K562 (cell line): ENCODE measurements at regions of chr11 and their contacts with region 1.

Region 1: GRCh38 chr11:93895106-93895862 is 44.9 kb upstream of the VSTM5 start:
- DNase-seq: peak; percentile 41 to 67 (median 46)
- ATAC-seq: peak; percentile 90
- H3K4me3 ChIP-seq: no peak overlapping the region
- H3K27ac ChIP-seq: no peak overlapping the region
- H3K4me1 ChIP-seq: no peaks in the 10 kb centered on the region
- H3K27me3 ChIP-seq: peaks cover 4 to 15% of the 10 kb centered on the region in 2 experiments; a peak in 4 of 5 replicates
- CTCF ChIP-seq: peak; percentile 66 to 88 (median 78)
- EP300 ChIP-seq: no peak
- POLR2A ChIP-seq: no peak
- RAD21 ChIP-seq: peak; percentile 93 to 95

Region 2: GRCh38 chr11:94417386-94417987 is 522.2 kb after region 1 on chr11:
- CTCF ChIA-PET with region 1: no interaction called
- POLR2A ChIA-PET with region 1: no interaction called
- in situ Hi-C with region 1: loop called (anchors 10 kb)
- intact Hi-C with region 1: no loop called
- DNase-seq: peak in 1 of 4 experiments; percentile 22
- ATAC-seq: peak; percentile 79
- H3K4me3 ChIP-seq: no peak overlapping the region
- H3K27ac ChIP-seq: no peak overlapping the region
- H3K4me1 ChIP-seq: no peaks in the 10 kb centered on the region
- H3K27me3 ChIP-seq: no peaks in the 10 kb centered on the region
- CTCF ChIP-seq: peak; percentile 27 to 54 (median 44); a peak in 4 of 6 replicates
- EP300 ChIP-seq: no peak
- POLR2A ChIP-seq: no peak
- RAD21 ChIP-seq: peak; percentile 79 to 80

Region 3: DNA sequence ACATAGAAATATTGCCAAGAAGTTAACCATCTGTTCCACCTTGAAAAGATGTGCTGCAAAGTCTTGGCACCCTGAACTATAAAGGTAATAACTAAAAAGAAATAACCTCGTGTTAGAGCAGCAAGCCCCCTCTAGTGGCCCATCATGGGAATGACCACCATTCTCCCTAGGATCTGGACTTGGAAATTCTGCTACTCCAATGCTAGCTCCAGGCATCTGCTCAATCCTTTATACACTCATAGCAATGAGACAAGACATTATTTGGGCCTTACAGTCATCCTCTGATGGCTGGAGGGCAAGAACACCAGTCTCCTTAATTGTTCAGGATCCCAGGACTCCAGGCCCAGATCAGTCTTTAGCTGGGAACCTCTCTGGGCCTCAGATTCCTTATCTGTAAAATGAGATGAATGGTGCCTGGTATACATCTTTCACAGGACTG is 1002.1 kb after region 1 on chr11:
- CTCF ChIA-PET with region 1: no interaction called
- POLR2A ChIA-PET with region 1: no interaction called
- in situ Hi-C with region 1: no loop called
- intact Hi-C with region 1: loop called (anchors 10 kb)
- DNase-seq: peak; percentile 46 to 64 (median 58)
- ATAC-seq: peak; percentile 84
- H3K4me3 ChIP-seq: no peak overlapping the region
- H3K27ac ChIP-seq: no peak overlapping the region
- H3K4me1 ChIP-seq: no peaks in the 10 kb centered on the region
- H3K27me3 ChIP-seq: no peaks in the 10 kb centered on the region
- CTCF ChIP-seq: peak; percentile 71 to 86 (median 84)
- EP300 ChIP-seq: no peak
- POLR2A ChIP-seq: no peak
- RAD21 ChIP-seq: peak; percentile 62 to 80